K562 (cell line): ENCODE measurements at regions of chr22 and their contacts with region 1.

Region 1: DNA sequence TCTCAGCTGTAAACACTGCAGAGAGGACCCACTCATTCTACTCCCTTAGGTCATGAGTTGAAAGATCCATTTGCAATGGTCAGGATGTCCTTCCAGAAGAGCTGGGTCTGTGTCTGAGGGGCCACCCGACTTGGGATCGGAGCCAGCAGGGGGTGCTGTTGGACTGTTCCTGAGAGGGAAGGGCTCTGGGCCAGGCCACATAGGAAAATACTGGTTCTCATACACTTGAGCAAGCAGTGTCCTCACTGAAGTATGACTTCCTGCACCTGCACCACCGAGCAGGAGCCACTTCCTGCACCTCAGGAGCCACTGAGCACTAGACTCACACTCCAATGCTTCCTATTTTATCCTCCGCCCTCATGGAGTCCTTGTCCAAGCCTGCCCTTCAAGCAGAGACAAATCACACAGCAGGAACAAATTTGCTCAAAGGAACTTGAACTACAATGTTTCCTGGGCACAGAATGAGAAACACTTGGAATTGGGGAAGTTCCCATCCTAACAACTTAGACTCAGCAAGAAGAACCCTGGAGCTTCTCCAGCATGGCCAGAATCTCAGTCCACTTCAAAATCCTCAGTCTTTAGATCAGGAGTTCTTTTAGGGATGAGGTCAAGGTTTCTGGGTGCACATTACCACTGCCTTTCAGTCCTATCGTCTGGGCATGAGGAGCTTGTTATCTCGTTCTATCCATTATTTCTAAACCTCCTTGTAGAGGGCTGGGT is 36.6 kb upstream of the VPREB1 start:
- DNase-seq: peak; percentile 96 to 98 (median 98)
- ATAC-seq: peak; percentile 94
- H3K4me3 ChIP-seq: no peak overlapping the region
- H3K27ac ChIP-seq: no peak overlapping the region
- H3K4me1 ChIP-seq: peaks cover 0 to 6% of the 10 kb centered on the region in 2 experiments; a peak in 2 of 5 replicates
- H3K27me3 ChIP-seq: peaks cover 48 to 50% of the 10 kb centered on the region in 2 experiments
- CTCF ChIP-seq: peak in 2 of 3 experiments; percentile 99 to 100; a peak in 4 of 6 replicates
- EP300 ChIP-seq: peak; percentile 38; the same call in 1 of the 2 replicates
- POLR2A ChIP-seq: no peak
- RAD21 ChIP-seq: peak in 1 of 2 experiments; percentile 99; a peak in 2 of 4 replicates

Region 2: GRCh38 chr22:22074634-22075381 is 133.2 kb before region 1 on chr22:
- CTCF ChIA-PET with region 1: no interaction called
- POLR2A ChIA-PET with region 1: no interaction called
- in situ Hi-C with region 1: no loop called
- intact Hi-C with region 1: no loop called
- DNase-seq: no peak
- ATAC-seq: peak; percentile 12
- H3K4me3 ChIP-seq: no peak overlapping the region
- H3K27ac ChIP-seq: no peak overlapping the region
- H3K4me1 ChIP-seq: peaks cover 0 to 5% of the 10 kb centered on the region in 2 experiments; a peak in 1 of 5 replicates
- H3K27me3 ChIP-seq: peaks cover 37 to 57% of the 10 kb centered on the region in 2 experiments
- CTCF ChIP-seq: no peak
- EP300 ChIP-seq: no peak
- POLR2A ChIP-seq: no peak
- RAD21 ChIP-seq: no peak

Region 3: DNA sequence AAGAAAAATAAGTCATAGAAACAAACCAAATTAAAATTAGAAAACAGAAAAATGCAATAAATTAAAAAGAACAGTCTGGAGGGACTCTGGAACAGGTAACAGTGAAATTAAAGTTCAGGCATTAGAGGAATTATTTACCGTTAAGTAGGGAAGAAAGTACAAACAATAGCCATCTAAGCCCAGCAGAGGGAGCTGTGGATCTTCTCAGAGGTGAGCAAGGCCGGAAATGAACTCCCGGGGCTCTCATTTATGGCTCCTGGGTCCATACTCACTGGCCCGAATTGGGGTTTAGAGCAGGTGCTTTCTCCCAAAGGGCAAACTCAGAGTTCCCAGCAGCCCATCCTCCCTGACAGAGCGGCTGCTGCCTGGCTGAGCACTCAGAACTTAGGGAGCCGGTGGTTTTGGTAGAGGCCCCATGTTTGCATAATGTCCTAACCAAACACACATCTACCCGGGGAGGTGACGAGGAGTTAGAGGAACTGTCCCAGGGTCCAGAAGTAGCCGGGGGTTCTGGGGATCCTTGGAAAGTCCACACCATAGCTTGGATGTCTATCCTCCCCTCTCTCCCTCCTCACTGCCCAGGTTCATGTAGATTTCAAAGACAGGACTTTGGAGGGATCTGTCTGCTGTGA is 51.2 kb before region 1 on chr22:
- CTCF ChIA-PET with region 1: interaction called, 5 read pairs
- POLR2A ChIA-PET with region 1: interaction called, 4 read pairs
- in situ Hi-C with region 1: no loop called
- intact Hi-C with region 1: loop called (anchors 1 kb)
- DNase-seq: peak; percentile 98 to 100 (median 99)
- ATAC-seq: peak; percentile 98
- H3K4me3 ChIP-seq: no peak overlapping the region
- H3K27ac ChIP-seq: peak overlapping the region; percentile 1; the same call in 1 of the 3 replicates
- H3K4me1 ChIP-seq: peaks cover 0 to 4% of the 10 kb centered on the region in 2 experiments; a peak in 1 of 5 replicates
- H3K27me3 ChIP-seq: peaks cover 8 to 9% of the 10 kb centered on the region in 2 experiments
- CTCF ChIP-seq: peak in 1 of 3 experiments; percentile 99; a peak in 2 of 6 replicates
- EP300 ChIP-seq: peak; percentile 79
- POLR2A ChIP-seq: no peak
- RAD21 ChIP-seq: no peak

Region 4: GRCh38 chr22:22235558-22235957 is 27.6 kb after region 1 on chr22:
- CTCF ChIA-PET with region 1: interaction called, 12 read pairs
- POLR2A ChIA-PET with region 1: interaction called, 7 read pairs
- in situ Hi-C with region 1: no loop called
- intact Hi-C with region 1: loop called (anchors 2 kb)
- DNase-seq: peak; percentile 78 to 85 (median 82)
- ATAC-seq: peak; percentile 84
- H3K4me3 ChIP-seq: no peak overlapping the region
- H3K27ac ChIP-seq: no peak overlapping the region
- H3K4me1 ChIP-seq: no peaks in the 10 kb centered on the region
- H3K27me3 ChIP-seq: peaks cover 46 to 65% of the 10 kb centered on the region in 2 experiments
- CTCF ChIP-seq: peak; percentile 90 to 97 (median 96)
- EP300 ChIP-seq: no peak
- POLR2A ChIP-seq: no peak
- RAD21 ChIP-seq: peak in 1 of 2 experiments; percentile 90; a peak in 3 of 4 replicates

Region 5: DNA sequence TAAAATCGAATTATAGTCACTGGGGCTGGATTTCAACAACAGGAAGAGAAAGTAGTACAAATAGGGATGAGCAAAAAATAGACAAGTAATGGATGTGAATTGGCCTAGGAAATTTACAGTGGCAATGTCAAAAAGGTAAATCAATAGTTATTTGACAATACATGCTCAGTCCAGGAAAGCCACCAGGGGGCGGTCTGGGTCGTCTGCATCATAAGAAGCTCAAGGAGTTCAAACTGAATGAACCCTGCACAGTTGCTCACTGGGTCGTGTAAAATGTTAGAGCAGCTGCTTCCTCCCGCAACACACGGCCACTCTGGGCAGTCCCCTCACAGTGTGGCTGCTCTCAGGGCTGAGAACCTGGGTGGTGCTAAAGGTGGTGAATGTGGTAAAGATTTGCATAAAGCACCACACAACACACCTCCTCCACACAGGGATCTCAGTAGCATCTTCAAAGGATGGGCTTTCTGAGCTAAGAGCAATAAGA is 214.7 kb after region 1 on chr22:
- CTCF ChIA-PET with region 1: interaction called, 20 read pairs
- POLR2A ChIA-PET with region 1: interaction called, 5 read pairs
- in situ Hi-C with region 1: no loop called
- intact Hi-C with region 1: loop called (anchors 1 kb)
- DNase-seq: peak; percentile 85 to 96 (median 89)
- ATAC-seq: peak; percentile 92
- H3K4me3 ChIP-seq: no peak overlapping the region
- H3K27ac ChIP-seq: no peak overlapping the region
- H3K4me1 ChIP-seq: no peaks in the 10 kb centered on the region
- H3K27me3 ChIP-seq: peaks cover 31 to 34% of the 10 kb centered on the region in 2 experiments
- CTCF ChIP-seq: peak in 1 of 3 experiments; percentile 99; a peak in 2 of 6 replicates
- EP300 ChIP-seq: no peak
- POLR2A ChIP-seq: no peak
- RAD21 ChIP-seq: no peak

Region 6: GRCh38 chr22:22588485-22589164 is 380.6 kb after region 1 on chr22:
- CTCF ChIA-PET with region 1: no interaction called
- POLR2A ChIA-PET with region 1: no interaction called
- in situ Hi-C with region 1: loop called (anchors 5 kb)
- intact Hi-C with region 1: loop called (anchors 5 kb)
- DNase-seq: no peak
- ATAC-seq: no peak
- H3K4me3 ChIP-seq: no peak overlapping the region
- H3K27ac ChIP-seq: no peak overlapping the region
- H3K4me1 ChIP-seq: no peaks in the 10 kb centered on the region
- H3K27me3 ChIP-seq: peaks cover 17 to 33% of the 10 kb centered on the region in 2 experiments; a peak in 4 of 5 replicates
- CTCF ChIP-seq: no peak
- EP300 ChIP-seq: no peak
- POLR2A ChIP-seq: no peak
- RAD21 ChIP-seq: no peak

Region 7: DNA sequence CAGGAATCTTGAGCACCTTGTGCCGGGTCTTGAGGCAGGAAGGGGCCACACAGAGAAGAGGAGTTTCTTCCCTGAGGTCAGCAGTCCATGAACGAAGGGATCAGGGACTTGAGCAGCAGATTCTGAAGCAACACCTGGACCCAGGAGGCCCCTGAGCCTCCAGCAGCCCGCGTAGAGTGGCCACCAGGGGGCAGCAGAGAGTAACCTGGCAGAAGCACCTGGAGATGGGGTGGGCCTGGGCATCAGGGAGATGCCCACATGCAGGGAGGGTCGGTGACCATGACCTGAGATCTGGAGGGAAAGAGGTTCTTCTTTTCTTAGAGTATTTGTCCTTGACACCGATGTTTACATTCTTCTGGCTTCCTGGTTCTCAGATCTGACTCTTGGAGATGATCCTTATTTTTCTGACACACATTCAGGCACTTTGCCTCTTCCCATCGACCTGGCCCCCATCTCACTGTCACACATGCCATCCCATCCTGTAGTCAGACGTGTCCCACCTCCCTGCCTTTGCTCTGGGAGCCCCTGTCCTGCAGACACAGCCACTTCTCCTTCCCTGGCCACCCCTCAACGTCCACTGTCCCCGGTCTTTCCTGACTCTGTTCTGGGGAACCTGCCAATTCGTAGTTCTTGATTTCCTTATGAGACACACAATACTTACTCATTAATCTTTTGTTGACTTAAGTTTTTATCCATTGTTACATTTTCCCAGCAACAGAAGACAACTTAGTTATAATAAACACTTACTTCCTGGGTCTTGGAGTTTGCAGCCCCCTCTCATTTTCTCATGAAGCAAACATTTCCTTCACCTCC is 502.9 kb after region 1 on chr22:
- CTCF ChIA-PET with region 1: no interaction called
- POLR2A ChIA-PET with region 1: interaction called, 3 read pairs
- in situ Hi-C with region 1: no loop called
- intact Hi-C with region 1: loop called (anchors 2 kb)
- DNase-seq: peak; percentile 93 to 100 (median 99)
- ATAC-seq: peak; percentile 88
- H3K4me3 ChIP-seq: no peak overlapping the region
- H3K27ac ChIP-seq: no peak overlapping the region
- H3K4me1 ChIP-seq: no peaks in the 10 kb centered on the region
- H3K27me3 ChIP-seq: peaks cover 3 to 20% of the 10 kb centered on the region in 2 experiments; a peak in 2 of 5 replicates
- CTCF ChIP-seq: no peak
- EP300 ChIP-seq: no peak
- POLR2A ChIP-seq: no peak
- RAD21 ChIP-seq: no peak

Region 8: DNA sequence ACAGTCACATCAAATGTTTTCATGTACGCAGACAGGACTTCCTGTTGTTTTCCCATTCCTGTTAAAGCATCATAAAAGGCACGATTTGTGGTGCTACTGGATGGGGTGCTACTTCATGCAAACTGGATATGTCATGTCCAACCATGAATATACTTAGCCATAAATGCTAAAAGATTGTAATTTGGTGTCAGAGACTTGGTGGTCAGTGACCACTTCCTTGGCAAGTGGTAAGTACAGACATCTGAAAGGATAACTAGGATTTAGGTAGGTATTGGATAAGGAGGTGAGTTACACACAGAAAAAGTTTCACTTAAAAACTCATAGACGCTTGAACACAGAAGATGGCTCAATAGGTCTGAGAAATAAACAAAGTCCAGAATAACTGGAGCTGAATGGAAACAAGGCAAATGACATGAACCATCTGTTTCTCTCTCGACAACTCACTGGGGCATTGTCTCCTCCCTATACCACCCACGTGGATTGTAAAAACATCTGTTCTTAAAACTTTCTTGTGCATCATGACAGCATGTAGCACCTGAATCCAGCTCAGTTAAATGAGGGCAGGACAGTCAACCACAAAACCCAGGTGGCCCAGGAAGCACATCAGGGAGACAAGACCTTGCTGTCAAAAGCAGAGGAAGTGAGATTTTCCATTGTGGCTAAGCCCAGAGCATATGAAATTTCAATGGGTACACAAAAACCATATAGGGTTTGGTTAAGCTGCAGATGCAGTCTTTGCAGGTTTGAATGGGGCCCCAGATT is 657.5 kb after region 1 on chr22:
- CTCF ChIA-PET with region 1: no interaction called
- POLR2A ChIA-PET with region 1: no interaction called
- in situ Hi-C with region 1: no loop called
- intact Hi-C with region 1: loop called (anchors 10 kb)
- DNase-seq: peak in 2 of 4 experiments; percentile 42 to 52
- ATAC-seq: no peak
- H3K4me3 ChIP-seq: no peak overlapping the region
- H3K27ac ChIP-seq: no peak overlapping the region
- H3K4me1 ChIP-seq: no peaks in the 10 kb centered on the region
- H3K27me3 ChIP-seq: peaks cover 0 to 20% of the 10 kb centered on the region in 2 experiments; a peak in 3 of 5 replicates
- CTCF ChIP-seq: no peak
- EP300 ChIP-seq: no peak
- POLR2A ChIP-seq: no peak
- RAD21 ChIP-seq: no peak